ENCODE measurements at regions of chr5 and their contacts with region 1.

Region 1: GRCh38 chr5:53425598-53426511 is 54.6 kb upstream of the FST start:
- DNase-seq: no peak
- H3K4me3 ChIP-seq: no peak overlapping the region
- H3K27ac ChIP-seq: no peak overlapping the region
- H3K4me1 ChIP-seq: no peaks in the 10 kb centered on the region
- H3K27me3 ChIP-seq: no peaks in the 10 kb centered on the region
- CTCF ChIP-seq: no peak
- POLR2A ChIP-seq: no peak

Region 2: DNA sequence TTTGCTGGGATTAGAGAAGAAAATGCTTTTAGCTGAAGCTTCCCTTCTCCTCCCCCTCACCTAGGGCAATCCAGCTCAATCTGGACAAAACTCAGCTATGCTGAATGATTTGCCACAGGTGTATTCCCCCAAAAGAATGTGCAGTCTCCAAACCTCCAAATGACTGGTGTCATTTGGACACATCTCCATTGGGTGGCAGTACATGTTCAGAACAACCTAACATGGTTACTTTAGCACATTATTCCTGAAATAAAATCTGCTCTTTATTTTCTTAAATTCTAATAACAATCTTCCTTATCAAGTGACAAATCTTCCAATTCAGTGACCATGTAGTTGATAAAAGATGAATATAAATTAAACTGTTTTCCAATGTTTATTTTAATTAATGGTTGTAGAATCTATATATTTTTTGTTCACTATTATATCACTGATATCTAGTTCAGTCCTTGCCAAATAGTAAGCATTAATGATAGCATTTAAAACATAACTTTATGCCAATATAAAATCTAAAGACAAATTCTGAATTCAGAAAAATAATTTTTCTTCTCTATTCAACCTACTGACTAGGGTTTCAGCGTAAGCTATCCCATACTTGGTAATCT is 255.0 kb before region 1 on chr5:
- intact Hi-C with region 1: loop called (anchors 5 kb)
- DNase-seq: no peak
- H3K4me3 ChIP-seq: no peak overlapping the region
- H3K27ac ChIP-seq: no peak overlapping the region
- H3K4me1 ChIP-seq: no peaks in the 10 kb centered on the region
- H3K27me3 ChIP-seq: no peaks in the 10 kb centered on the region
- CTCF ChIP-seq: peak in 3 of 4 experiments; percentile 27 to 57 (median 51)
- POLR2A ChIP-seq: no peak

Region 3: GRCh38 chr5:53249529-53250200 is 176.2 kb before region 1 on chr5:
- intact Hi-C with region 1: loop called (anchors 10 kb)
- DNase-seq: no peak
- H3K4me3 ChIP-seq: no peak overlapping the region
- H3K27ac ChIP-seq: no peak overlapping the region
- H3K4me1 ChIP-seq: no peaks in the 10 kb centered on the region
- H3K27me3 ChIP-seq: no peaks in the 10 kb centered on the region
- CTCF ChIP-seq: no peak
- POLR2A ChIP-seq: no peak